K562 (cell line): ENCODE measurements at regions of chr5 and their contacts with region 1.

Region 1: GRCh38 chr5:59174248-59174844 is 591.5 kb downstream of the RAB3C start:
- DNase-seq: peak in 2 of 4 experiments; percentile 20 to 44
- ATAC-seq: peak; percentile 82
- H3K4me3 ChIP-seq: no peak overlapping the region
- H3K27ac ChIP-seq: no peak overlapping the region
- H3K4me1 ChIP-seq: no peaks in the 10 kb centered on the region
- H3K27me3 ChIP-seq: no peaks in the 10 kb centered on the region
- CTCF ChIP-seq: peak; percentile 48 to 70 (median 60)
- EP300 ChIP-seq: no peak
- POLR2A ChIP-seq: no peak
- RAD21 ChIP-seq: peak; percentile 52 to 54

Region 2: DNA sequence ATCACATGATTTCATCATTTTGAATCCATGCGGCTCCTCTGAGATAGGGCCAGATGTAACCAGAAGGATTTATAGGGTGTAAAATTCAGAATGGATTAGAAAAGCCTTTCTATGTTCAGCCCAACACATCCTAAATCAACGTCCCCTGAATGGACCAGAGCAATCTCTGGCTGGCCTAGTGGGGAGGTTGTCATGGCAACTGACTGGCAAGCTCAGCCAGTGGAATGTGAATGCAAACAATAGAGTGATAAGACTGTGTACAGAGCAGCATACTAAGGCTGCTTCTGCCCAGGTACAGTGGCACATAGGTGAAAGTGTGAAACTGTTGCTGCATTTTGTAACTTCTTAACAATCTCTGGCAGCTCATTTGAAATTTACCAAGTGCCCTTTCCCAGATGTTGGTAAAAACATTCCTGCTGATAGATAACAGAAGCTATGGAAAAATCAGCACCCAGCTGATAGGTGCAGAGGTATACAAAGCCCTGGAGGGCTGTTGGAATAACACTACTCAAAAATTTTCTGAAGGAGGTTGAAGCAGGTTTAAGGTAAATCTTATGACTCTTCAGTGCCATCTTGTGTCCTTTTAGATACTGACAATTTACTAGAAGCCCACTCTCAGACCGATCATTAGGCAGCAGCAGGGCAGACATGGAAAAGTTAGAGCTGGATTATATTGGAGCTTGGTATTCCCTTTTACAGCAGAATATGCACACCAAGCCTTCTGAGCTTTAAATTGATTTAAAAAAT is 324.3 kb before region 1 on chr5:
- CTCF ChIA-PET with region 1: no interaction called
- POLR2A ChIA-PET with region 1: no interaction called
- in situ Hi-C with region 1: no loop called
- intact Hi-C with region 1: no loop called
- DNase-seq: peak in 2 of 4 experiments; percentile 10 to 20
- ATAC-seq: peak; percentile 66
- H3K4me3 ChIP-seq: no peak overlapping the region
- H3K27ac ChIP-seq: no peak overlapping the region
- H3K4me1 ChIP-seq: no peaks in the 10 kb centered on the region
- H3K27me3 ChIP-seq: no peaks in the 10 kb centered on the region
- CTCF ChIP-seq: peak in 2 of 3 experiments; percentile 31 to 42; a peak in 3 of 6 replicates
- EP300 ChIP-seq: no peak
- POLR2A ChIP-seq: no peak
- RAD21 ChIP-seq: peak; percentile 41 to 60

Region 3: GRCh38 chr5:59039296-59040023 is 134.9 kb before region 1 on chr5:
- CTCF ChIA-PET with region 1: no interaction called
- POLR2A ChIA-PET with region 1: no interaction called
- in situ Hi-C with region 1: no loop called
- intact Hi-C with region 1: loop called (anchors 10 kb)
- DNase-seq: peak in 2 of 4 experiments; percentile 3 to 7
- ATAC-seq: no peak; the same call in 1 of the 3 replicates
- H3K4me3 ChIP-seq: no peak overlapping the region
- H3K27ac ChIP-seq: no peak overlapping the region
- H3K4me1 ChIP-seq: peaks cover 0 to 11% of the 10 kb centered on the region in 2 experiments; a peak in 2 of 5 replicates
- H3K27me3 ChIP-seq: peaks cover 11 to 16% of the 10 kb centered on the region in 2 experiments; a peak in 4 of 5 replicates
- CTCF ChIP-seq: no peak
- EP300 ChIP-seq: no peak
- POLR2A ChIP-seq: no peak
- RAD21 ChIP-seq: no peak

Region 4: DNA sequence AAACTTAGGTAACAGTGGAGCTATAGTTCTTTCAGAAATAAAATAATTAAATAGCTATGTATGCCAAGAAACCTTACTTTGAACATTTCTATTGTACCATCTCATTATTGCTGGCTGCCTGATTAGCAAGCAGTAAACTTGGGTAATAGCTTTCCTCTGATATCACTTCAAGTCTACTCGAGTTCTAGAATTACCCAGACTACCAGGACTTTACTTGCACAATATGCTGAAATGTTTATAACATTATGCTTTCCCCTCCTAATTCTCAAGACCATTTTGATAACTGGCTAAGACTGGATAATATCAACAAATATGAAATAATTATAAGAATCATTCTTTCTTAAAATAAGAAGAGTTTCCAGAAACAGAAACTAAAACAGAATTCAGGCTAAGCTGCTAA is 78.9 kb before region 1 on chr5:
- CTCF ChIA-PET with region 1: no interaction called
- POLR2A ChIA-PET with region 1: no interaction called
- in situ Hi-C with region 1: no loop called
- intact Hi-C with region 1: no loop called
- DNase-seq: no peak
- ATAC-seq: no peak
- H3K4me3 ChIP-seq: no peak overlapping the region
- H3K27ac ChIP-seq: no peak overlapping the region
- H3K4me1 ChIP-seq: no peaks in the 10 kb centered on the region
- H3K27me3 ChIP-seq: no peaks in the 10 kb centered on the region
- CTCF ChIP-seq: no peak
- EP300 ChIP-seq: no peak
- POLR2A ChIP-seq: no peak
- RAD21 ChIP-seq: no peak

Region 5: GRCh38 chr5:59317023-59317773 is 142.9 kb after region 1 on chr5:
- CTCF ChIA-PET with region 1: no interaction called
- POLR2A ChIA-PET with region 1: no interaction called
- in situ Hi-C with region 1: no loop called
- intact Hi-C with region 1: no loop called
- DNase-seq: no peak
- ATAC-seq: no peak
- H3K4me3 ChIP-seq: no peak overlapping the region
- H3K27ac ChIP-seq: no peak overlapping the region
- H3K4me1 ChIP-seq: no peaks in the 10 kb centered on the region
- H3K27me3 ChIP-seq: no peaks in the 10 kb centered on the region
- CTCF ChIP-seq: no peak
- EP300 ChIP-seq: no peak
- POLR2A ChIP-seq: no peak
- RAD21 ChIP-seq: no peak

Region 6: DNA sequence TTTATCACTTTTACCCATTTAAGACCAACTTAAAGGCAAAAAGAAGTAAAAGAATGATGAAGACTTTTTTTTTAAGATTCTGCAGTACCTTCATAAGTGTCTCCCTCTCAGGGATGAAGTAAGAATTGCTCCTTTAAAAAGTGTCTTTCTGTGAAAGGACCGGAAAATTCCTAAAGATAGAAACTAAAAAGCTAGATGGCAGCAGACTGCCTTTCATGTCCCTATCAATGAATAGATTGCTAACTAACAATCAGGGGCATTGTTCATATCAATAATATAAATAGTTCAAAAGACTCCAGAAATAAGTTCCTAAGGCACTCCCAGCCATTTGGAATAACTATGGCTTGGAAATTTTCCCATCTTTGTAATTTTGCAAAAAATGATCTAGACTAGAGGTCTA is 161.2 kb after region 1 on chr5:
- CTCF ChIA-PET with region 1: no interaction called
- POLR2A ChIA-PET with region 1: no interaction called
- in situ Hi-C with region 1: no loop called
- intact Hi-C with region 1: no loop called
- DNase-seq: no peak
- ATAC-seq: no peak
- H3K4me3 ChIP-seq: no peak overlapping the region
- H3K27ac ChIP-seq: no peak overlapping the region
- H3K4me1 ChIP-seq: no peaks in the 10 kb centered on the region
- H3K27me3 ChIP-seq: no peaks in the 10 kb centered on the region
- CTCF ChIP-seq: no peak
- EP300 ChIP-seq: no peak
- POLR2A ChIP-seq: no peak
- RAD21 ChIP-seq: no peak